Left cardiac atrium (tissue), 4 donors: ENCODE measurements at regions of chr5 and their contacts with region 1.

Region 1: DNA sequence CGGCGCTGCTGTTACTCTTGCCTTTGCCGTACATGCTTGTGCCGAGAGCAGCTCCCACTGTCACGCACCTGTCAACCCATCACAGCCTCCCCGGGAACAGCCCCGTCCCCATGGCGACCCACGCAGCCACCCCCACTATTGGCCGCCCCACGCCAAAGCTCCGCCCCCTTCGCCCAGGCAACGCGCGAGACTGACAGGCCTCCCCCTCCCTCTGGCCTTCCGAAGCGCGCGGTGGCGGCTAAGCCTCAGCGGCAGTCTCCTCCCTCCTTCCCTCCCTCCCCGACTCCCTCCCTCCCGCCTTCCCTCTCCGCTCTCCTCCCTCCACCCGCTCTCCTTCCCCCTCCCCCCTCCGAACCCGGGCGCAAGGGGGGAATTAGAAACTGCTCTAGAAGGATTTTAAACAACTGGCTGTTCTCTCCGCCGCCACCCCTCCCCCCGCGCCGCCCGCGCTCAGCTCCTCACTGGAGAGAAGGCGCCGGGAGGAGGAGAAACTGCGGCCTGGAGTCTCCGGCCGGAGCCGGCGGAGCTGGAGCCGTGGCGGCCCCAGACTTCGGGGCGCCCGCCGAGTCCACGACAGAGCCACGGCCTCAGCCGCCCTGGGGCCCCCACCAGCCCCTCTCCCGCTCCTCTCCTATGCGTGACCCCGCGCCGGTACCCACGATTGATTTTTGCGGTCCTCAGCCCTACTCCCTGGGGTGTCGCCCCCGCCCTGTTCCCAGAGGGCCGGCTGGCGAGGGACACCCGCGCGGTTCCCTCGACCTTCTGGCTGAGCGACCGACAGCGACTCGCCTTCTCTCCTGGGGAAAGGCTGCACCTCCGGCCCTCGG is at the start of gene SSBP2:
- DNase-seq: peak; percentile 98
- ATAC-seq: peak; percentile 93 to 97
- total RNA-seq, gene SSBP2: 37.7 to 46.9 TPM

Region 2: GRCh38 chr5:81425569-81425968 is 325.7 kb before region 1 on chr5:
- intact Hi-C with region 1: loop called in 1 of 2 experiments (anchors 5 kb)
- DNase-seq: no peak
- ATAC-seq: peak; percentile 47 to 48

Region 3: DNA sequence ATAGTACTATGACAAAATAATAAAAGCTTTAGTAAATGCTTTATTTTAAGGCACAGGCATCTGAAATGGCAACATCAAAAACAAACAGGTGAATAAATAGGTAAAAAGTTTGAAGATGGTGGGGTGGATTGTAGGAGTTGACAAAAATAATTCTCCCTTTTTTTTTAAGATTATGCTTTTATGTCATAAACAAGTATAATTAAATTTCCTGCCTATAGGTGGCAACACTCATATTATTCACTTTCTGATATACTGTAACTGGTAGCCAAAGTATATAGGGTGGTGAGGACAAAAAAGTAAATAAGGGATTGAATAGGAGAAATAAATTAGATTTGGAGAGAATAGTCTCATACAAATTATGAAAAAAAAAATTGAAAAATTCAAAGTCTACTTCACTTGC is 237.2 kb before region 1 on chr5:
- intact Hi-C with region 1: loop called (anchors 5 to 10 kb)
- DNase-seq: no peak
- ATAC-seq: no peak

Region 4: DNA sequence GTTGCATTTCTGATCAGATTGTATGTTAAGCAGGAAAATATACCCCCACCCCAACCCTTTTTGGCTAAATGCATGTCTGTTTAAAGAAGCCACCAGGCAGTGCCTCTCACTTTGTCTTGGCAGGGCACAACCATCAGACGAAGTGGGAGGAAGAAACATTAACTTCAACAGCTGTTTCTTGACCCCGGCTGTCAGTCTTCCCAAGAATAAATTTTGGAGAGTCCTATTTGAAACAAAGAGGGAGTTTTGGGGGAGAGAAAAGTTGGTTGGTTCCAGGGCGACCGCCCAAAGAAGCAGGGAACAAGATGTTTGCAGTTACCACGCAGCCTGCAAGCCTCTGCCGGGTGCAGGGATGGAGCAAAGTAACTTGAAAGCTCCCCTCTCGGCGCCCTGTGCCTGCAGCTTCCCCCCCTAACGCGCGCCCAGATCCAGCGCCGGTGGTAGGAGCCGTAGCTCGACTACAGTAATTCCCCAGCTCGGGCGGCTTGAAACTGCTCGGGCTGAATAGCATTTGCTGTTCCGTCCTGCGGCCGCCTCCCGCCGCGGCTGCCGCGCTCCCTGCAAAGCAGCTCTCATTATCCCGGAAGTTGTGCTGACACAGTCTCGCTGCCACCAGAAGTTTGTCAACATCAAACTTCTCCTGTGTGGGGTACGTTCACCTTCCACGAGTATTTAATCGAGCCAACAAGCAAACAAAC is 100.4 kb after region 1 on chr5:
- intact Hi-C with region 1: loop called (anchors 1 to 2 kb)
- DNase-seq: peak; percentile 95
- ATAC-seq: peak; percentile 89 to 94

Region 5: GRCh38 chr5:82165740-82166530 is 414.7 kb after region 1 on chr5:
- intact Hi-C with region 1: loop called in 1 of 2 experiments (anchors 10 kb)
- DNase-seq: peak; percentile 73
- ATAC-seq: peak; percentile 99 to 100